Dorsolateral prefrontal cortex (tissue), 120 donors: ENCODE measurements at regions of chr10 and their contacts with region 1.

Region 1: GRCh38 chr10:61140765-61141392 is 196.9 kb upstream of the RHOBTB1 start:
- DNase-seq: peak in 3 of 10 donors; percentile 4 to 48 (median 44)
- H3K4me3 ChIP-seq: peak overlapping the region in 36 of 59 donors; percentile 1 to 53 (median 28)
- H3K27ac ChIP-seq: peak overlapping the region in 9 of 59 donors; percentile 2 to 54 (median 14)
- H3K27me3 ChIP-seq: no peaks in the 10 kb centered on the region
- CTCF ChIP-seq: peak; percentile 51 to 90 (median 79)

Region 2: DNA sequence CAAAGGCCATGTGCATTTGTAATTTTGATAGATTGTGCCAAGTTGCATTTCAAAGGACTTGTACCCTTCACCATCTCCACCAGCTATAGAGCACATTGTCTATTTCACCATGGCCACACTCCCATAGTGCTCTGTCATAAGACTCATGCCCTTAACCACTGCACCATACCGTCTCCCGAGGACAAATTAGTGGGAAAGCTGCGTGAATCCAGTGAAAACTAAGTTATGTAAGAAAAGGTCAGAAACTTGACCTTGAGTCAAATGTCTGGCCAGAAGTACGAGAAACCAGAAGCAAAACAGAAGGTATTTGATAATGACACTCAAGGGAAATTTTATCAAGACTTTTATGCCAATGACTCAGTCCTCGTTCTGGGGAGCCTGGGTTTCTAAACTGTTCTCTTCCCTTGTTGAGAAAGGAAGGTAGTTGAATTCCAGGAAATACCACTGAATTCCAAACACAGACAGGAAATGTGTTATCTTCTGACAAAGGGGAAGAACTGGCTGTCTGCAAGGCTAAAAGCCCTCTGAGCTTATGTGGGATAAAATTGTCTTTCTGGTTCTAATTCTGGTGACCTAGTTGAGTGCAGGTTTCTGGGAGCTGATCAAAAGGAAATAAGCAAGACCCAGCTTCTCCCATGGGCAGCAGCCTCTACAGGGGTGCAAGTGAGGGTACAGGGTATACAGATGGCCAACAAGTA is 312.9 kb before region 1 on chr10:
- intact Hi-C with region 1: no loop called
- DNase-seq: no peak
- H3K4me3 ChIP-seq: no peak overlapping the region
- H3K27ac ChIP-seq: peak overlapping the region in 4 of 59 donors; percentile 1 to 37 (median 7)
- H3K27me3 ChIP-seq: no peaks in the 10 kb centered on the region
- CTCF ChIP-seq: no peak

Region 3: GRCh38 chr10:61097026-61097425 is 43.9 kb before region 1 on chr10:
- intact Hi-C with region 1: loop called in 1 of 2 experiments (anchors 1 kb)
- DNase-seq: no peak
- H3K4me3 ChIP-seq: no peak overlapping the region
- H3K27ac ChIP-seq: peak overlapping the region in 51 of 59 donors; percentile 21 to 96 (median 83)
- H3K27me3 ChIP-seq: no peaks in the 10 kb centered on the region
- CTCF ChIP-seq: no peak

Region 4: DNA sequence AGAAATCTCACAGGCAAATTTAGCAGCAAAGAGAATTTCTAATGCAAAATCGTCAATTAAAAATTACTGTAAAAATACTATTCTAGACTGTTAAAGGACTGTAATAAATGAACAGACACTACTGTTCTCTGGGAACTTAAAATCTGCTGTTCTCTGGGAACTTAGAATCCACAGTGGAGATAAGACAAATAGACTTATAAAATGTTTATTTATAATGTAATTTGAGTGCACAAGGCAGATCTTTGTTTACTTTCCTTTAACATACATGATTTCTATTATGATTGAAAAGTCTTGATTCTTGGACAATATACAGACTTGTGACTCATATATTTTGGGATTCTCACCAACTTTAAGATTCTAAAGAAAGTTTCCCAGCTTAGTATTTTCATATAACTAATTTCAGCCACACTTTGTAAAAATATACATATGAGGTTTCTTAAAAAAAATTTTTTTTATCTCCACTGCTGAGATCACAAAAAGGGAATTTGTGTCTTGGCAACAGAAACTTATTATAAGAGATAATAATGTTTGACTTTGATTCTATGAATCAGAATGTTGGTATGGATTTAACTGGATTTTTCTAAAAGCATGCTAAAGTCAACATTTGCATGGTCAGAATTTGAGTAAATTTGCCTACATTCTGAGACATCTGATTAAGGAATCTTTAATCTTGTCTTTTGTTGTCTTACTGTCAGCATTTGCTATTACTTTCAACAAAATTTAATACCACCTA is 30.5 kb before region 1 on chr10:
- intact Hi-C with region 1: loop called in 1 of 2 experiments (anchors 2 kb)
- DNase-seq: no peak
- H3K4me3 ChIP-seq: no peak overlapping the region
- H3K27ac ChIP-seq: no peak overlapping the region
- H3K27me3 ChIP-seq: no peaks in the 10 kb centered on the region
- CTCF ChIP-seq: no peak

Region 5: GRCh38 chr10:61284222-61284890 is 143.5 kb after region 1 on chr10:
- intact Hi-C with region 1: loop called (anchors 5 kb)
- DNase-seq: no peak
- H3K4me3 ChIP-seq: no peak overlapping the region
- H3K27ac ChIP-seq: peak overlapping the region in 15 of 59 donors; percentile 2 to 67 (median 22)
- H3K27me3 ChIP-seq: no peaks in the 10 kb centered on the region
- CTCF ChIP-seq: peak; percentile 67 to 96 (median 85)